Activated CD4-positive, alpha-beta memory T cell treated with anti-CD3 and anti-CD28 coated beads for 36 hours (primary cell): ENCODE measurements at regions of chr9 and their contacts with region 1.

Region 1: GRCh38 chr9:35079426-35080341 is at the start of gene FANCG:
- DNase-seq: peak; percentile 91
- H3K4me3 Mint-ChIP-seq: peak within 1 kb of the TSS; percentile 92
- H3K27ac Mint-ChIP-seq: peak within 1 kb of the TSS; percentile 98
- H3K4me1 Mint-ChIP-seq: peaks cover 16% of the 10 kb centered on the region
- H3K27me3 Mint-ChIP-seq: no peaks in the 10 kb centered on the region
- total RNA-seq, gene FANCG: 103 to 107 TPM

Region 2: DNA sequence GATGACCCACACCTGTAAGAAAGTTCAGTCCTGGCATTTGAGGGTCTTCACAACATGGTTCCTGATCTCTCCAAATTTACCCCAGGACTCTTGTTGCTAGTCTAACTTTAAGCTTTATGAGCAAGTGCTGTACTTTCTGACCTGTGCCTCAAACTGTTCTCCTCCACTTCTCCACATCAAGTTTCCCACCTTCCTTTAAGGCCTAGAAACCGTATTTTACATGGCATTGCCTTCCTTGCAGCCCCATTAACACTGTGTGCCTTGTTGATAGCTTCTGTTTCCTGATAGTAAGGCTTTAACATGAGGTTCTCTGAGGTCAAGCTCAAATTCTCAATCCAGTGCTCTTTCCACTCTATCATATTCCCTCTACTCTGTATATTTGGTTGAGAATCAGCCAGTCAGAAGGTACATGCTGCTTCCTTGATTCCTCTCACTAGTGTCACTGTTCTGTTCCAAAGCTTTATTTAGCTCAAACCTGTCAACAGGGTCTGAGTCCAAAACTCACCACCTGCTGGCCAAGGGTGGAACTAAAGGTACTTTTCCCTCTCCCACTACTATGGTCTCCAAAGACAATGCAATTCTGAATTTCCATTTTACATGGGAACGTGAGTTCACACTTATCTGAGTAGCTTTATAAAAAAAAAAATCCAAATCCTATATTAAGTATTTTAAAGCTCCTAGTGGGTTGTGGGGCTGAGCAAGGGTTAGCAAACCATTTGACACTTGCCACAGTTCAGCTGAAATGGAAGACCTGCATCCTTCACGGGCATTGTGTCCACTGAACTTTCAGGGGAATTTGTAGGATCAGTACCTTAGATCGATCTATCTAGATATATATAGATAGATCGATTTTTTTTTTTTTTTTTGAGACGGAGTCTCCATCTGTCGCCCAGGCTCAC is 28.4 kb before region 1 on chr9:
- CTCF ChIA-PET with region 1: interaction called, 14 read pairs
- POLR2A ChIA-PET with region 1: interaction called, 3 read pairs
- intact Hi-C with region 1: no loop called
- DNase-seq: peak; percentile 63
- H3K4me3 Mint-ChIP-seq: no peak overlapping the region
- H3K27ac Mint-ChIP-seq: no peak overlapping the region
- H3K4me1 Mint-ChIP-seq: no peaks in the 10 kb centered on the region
- H3K27me3 Mint-ChIP-seq: no peaks in the 10 kb centered on the region

Region 3: DNA sequence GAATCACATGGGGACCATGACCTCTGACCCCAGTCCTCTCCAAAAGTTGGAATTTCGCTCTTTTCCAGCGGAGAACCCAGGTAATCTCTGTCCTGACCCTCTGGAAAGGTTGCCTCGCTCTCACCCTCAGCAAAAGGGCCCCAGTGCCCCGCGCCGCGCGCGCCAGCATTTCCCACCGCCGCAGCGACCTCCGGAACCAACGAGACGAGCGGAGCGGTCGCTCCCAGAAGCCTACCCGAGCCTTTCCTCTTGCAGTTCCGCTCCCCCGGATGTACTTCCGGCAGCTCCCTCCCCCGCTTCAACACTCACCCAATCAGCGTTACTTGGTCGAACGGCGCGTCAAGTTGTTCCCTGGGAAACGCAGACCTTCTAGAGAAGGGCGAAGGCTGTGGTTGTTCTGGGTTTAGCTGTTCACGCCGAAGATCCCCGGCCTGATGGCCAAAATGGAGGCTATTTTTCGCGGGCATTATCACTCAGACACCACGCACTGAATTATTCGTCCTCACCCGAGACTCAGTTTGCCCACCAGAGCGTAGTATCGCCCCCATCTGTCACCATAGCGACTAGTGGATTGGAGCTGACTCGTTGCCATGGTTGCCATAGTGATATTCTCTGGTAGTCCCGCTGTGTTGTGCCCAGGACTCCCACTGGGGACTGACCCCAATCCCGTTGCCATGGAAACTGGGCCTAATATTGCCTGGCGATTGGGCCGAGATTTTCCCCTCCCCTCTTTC is 23.4 kb after region 1 on chr9 and contains the start of gene STOML2:
- CTCF ChIA-PET with region 1: interaction called, 40 read pairs
- POLR2A ChIA-PET with region 1: interaction called, 10 read pairs
- intact Hi-C with region 1: loop called (anchors 1 kb)
- DNase-seq: peak; percentile 97
- H3K4me3 Mint-ChIP-seq: peak within 1 kb of the TSS; percentile 99
- H3K27ac Mint-ChIP-seq: peak within 1 kb of the TSS; percentile 93
- H3K4me1 Mint-ChIP-seq: peaks cover 30% of the 10 kb centered on the region
- H3K27me3 Mint-ChIP-seq: no peaks in the 10 kb centered on the region
- total RNA-seq, gene STOML2: 162 TPM

Region 4: DNA sequence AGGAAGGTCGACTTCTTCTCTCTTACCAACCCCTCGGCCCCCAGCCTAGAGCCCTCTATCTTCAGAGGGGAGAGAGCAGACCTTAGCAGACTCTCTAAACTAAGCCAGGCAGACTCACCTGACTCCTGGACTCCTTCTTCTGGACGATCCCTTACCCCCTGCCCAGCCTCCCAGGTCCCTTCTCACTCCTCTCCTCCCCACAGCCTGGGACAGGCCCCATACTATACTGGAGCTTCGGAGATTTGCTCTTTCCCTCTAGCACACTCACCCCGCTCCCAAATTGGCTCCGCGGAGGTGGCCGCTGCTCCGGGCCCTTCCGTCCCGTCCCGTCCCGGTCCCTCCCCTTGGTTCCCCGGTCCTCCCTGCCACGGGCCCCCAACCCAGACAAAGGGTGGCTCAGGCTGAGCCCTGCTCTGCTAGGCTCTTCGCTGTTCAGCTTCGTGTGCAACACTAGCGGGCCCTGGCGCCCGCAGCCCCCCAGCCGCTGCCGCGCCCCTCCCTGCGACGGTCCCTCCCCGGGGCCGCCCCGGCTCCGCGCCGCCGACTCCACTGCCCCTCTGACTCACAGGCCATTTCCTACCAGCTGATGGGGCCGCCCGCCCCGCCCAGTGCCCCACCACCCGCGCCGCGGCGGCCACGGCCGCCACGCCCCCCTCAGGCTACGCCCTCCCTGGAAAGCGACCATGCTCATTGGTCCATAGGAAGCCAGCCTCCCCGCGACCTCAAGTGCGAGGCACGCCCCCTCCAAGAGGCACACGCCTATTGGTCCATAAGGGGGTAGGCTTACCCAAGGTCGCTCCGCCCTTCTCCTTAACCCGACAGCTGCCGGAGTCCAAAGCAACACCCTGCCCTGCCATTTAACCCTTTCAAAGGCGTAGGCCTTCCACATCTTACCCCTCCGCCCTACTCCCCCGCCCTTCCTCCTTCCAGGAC is 31.6 kb after region 1 on chr9:
- CTCF ChIA-PET with region 1: interaction called, 3 read pairs
- POLR2A ChIA-PET with region 1: interaction called, 10 read pairs
- intact Hi-C with region 1: no loop called
- DNase-seq: peak; percentile 98
- H3K4me3 Mint-ChIP-seq: peak overlapping the region; percentile 75
- H3K27ac Mint-ChIP-seq: peak overlapping the region; percentile 81
- H3K4me1 Mint-ChIP-seq: peaks cover 42% of the 10 kb centered on the region
- H3K27me3 Mint-ChIP-seq: no peaks in the 10 kb centered on the region